IMR-90 (cell line): ENCODE measurements at regions of chr1 and their contacts with region 1.

Region 1: DNA sequence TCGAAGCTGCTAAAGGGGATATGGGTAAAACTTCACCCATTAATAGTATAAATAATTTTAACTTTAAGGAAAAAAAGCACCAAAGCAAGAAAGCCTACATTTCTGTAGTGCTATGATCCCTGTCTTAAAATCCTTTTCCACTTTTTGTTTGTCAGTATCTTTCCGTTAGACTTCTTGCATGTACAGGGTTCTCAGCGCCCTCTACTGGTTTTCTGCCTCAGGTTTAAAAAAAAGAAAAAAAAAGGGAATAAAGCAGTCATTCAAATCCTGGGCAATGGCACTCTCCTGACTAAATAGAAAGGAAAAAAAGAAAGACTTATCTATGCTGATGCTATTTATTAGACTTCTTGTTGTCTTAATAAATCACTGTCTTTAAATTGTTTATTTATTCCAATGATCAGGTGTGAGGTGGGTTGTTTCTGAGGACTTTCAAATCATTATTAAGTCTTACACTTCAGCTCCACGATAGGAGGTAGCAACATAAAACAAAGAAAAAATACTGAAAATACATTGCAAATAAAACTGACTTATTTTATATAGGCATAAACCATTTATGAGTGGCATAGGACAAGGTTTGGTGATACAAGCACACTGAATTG is 475.4 kb upstream of the NR5A2 start:
- DNase-seq: peak; percentile 76
- ATAC-seq: no peak
- H3K4me3 ChIP-seq: no peak overlapping the region
- H3K27ac ChIP-seq: no peak overlapping the region
- H3K4me1 ChIP-seq: peaks cover 7% of the 10 kb centered on the region
- H3K27me3 ChIP-seq: no peaks in the 10 kb centered on the region; the same call in 1 of the 2 replicates
- CTCF ChIP-seq: peak; percentile 85
- POLR2A ChIP-seq: no peak
- RAD21 ChIP-seq: peak; percentile 83

Region 2: GRCh38 chr1:198465201-198466144 is 1086.6 kb before region 1 on chr1:
- CTCF ChIA-PET with region 1: no interaction called
- POLR2A ChIA-PET with region 1: no interaction called
- dilution Hi-C with region 1: no loop called
- in situ Hi-C with region 1: no loop called
- intact Hi-C with region 1: loop called (anchors 10 kb)
- DNase-seq: peak; percentile 70
- ATAC-seq: peak; percentile 88
- H3K4me3 ChIP-seq: no peak overlapping the region
- H3K27ac ChIP-seq: no peak overlapping the region
- H3K4me1 ChIP-seq: peaks cover 4% of the 10 kb centered on the region
- H3K27me3 ChIP-seq: no peaks in the 10 kb centered on the region
- CTCF ChIP-seq: peak; percentile 74
- POLR2A ChIP-seq: no peak
- RAD21 ChIP-seq: peak; percentile 85

Region 3: GRCh38 chr1:198771563-198772153 is 780.4 kb before region 1 on chr1:
- CTCF ChIA-PET with region 1: no interaction called
- POLR2A ChIA-PET with region 1: no interaction called
- dilution Hi-C with region 1: no loop called
- in situ Hi-C with region 1: no loop called
- intact Hi-C with region 1: loop called (anchors 1 kb)
- DNase-seq: peak; percentile 56
- ATAC-seq: no peak; the same call in 1 of the 2 replicates
- H3K4me3 ChIP-seq: no peak overlapping the region
- H3K27ac ChIP-seq: no peak overlapping the region
- H3K4me1 ChIP-seq: peaks cover 3% of the 10 kb centered on the region; the same call in 1 of the 2 replicates
- H3K27me3 ChIP-seq: no peaks in the 10 kb centered on the region
- CTCF ChIP-seq: peak; percentile 64
- POLR2A ChIP-seq: no peak
- RAD21 ChIP-seq: peak; percentile 86

Region 4: DNA sequence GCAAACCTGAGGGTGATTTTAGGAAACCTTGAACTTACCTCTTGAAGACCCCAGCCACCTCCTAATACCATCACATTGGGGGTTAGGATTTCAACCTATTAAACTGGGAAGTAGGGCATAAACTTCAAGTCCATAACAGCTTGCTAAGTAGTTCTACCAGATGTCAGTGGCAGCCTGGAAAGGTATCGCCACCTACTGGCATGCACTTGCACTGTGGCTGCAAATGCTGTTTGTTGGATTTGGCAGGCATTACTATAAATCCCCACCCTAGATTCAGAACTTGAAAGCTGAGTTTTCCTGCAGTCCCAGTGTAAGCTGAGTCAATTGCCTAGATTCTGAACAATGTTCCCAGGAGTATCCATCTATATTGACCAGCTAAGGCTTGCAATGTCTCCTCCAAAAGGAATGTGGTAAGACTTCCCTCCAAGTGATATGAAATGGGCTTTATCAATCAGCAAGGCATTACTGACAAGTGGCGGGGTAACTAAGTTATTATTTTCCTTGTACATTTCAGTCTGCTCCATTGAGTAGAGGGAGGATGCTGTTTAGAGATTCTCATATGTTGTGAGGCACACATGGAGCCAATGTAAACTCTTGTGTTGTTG is 438.7 kb before region 1 on chr1:
- CTCF ChIA-PET with region 1: interaction called, 3 read pairs
- POLR2A ChIA-PET with region 1: no interaction called
- dilution Hi-C with region 1: no loop called
- in situ Hi-C with region 1: no loop called
- intact Hi-C with region 1: loop called (anchors 5 kb)
- DNase-seq: peak; percentile 82
- ATAC-seq: peak; percentile 73; the same call in 1 of the 2 replicates
- H3K4me3 ChIP-seq: no peak overlapping the region
- H3K27ac ChIP-seq: no peak overlapping the region
- H3K4me1 ChIP-seq: no peaks in the 10 kb centered on the region
- H3K27me3 ChIP-seq: no peaks in the 10 kb centered on the region
- CTCF ChIP-seq: peak; percentile 87
- POLR2A ChIP-seq: no peak
- RAD21 ChIP-seq: peak; percentile 90

Region 5: GRCh38 chr1:199422198-199422597 is 129.9 kb before region 1 on chr1:
- CTCF ChIA-PET with region 1: no interaction called
- POLR2A ChIA-PET with region 1: no interaction called
- dilution Hi-C with region 1: no loop called
- in situ Hi-C with region 1: no loop called
- intact Hi-C with region 1: loop called (anchors 5 kb)
- DNase-seq: peak; percentile 55
- ATAC-seq: peak; percentile 82
- H3K4me3 ChIP-seq: no peak overlapping the region
- H3K27ac ChIP-seq: no peak overlapping the region
- H3K4me1 ChIP-seq: peaks cover 2% of the 10 kb centered on the region; the same call in 1 of the 2 replicates
- H3K27me3 ChIP-seq: no peaks in the 10 kb centered on the region
- CTCF ChIP-seq: peak; percentile 56
- POLR2A ChIP-seq: no peak
- RAD21 ChIP-seq: peak; percentile 56